ENCODE measurements at regions of chr13 and their contacts with region 1.

Region 1: GRCh38 chr13:23871616-23872220 is 17.5 kb downstream of the MIPEP start:
- DNase-seq: peak in 1 of 2 donors; percentile 39
- ATAC-seq: peak in 1 of 3 donors; percentile 30
- H3K4me3 ChIP-seq: no peak overlapping the region
- H3K4me3 Mint-ChIP-seq: no peak overlapping the region
- H3K27ac ChIP-seq: no peak overlapping the region
- H3K27ac Mint-ChIP-seq: no peak overlapping the region
- H3K4me1 ChIP-seq: no peaks in the 10 kb centered on the region
- H3K4me1 Mint-ChIP-seq: no peaks in the 10 kb centered on the region
- H3K27me3 ChIP-seq: no peaks in the 10 kb centered on the region
- H3K27me3 Mint-ChIP-seq: no peaks in the 10 kb centered on the region
- CTCF ChIP-seq: peak; percentile 81

Region 2: DNA sequence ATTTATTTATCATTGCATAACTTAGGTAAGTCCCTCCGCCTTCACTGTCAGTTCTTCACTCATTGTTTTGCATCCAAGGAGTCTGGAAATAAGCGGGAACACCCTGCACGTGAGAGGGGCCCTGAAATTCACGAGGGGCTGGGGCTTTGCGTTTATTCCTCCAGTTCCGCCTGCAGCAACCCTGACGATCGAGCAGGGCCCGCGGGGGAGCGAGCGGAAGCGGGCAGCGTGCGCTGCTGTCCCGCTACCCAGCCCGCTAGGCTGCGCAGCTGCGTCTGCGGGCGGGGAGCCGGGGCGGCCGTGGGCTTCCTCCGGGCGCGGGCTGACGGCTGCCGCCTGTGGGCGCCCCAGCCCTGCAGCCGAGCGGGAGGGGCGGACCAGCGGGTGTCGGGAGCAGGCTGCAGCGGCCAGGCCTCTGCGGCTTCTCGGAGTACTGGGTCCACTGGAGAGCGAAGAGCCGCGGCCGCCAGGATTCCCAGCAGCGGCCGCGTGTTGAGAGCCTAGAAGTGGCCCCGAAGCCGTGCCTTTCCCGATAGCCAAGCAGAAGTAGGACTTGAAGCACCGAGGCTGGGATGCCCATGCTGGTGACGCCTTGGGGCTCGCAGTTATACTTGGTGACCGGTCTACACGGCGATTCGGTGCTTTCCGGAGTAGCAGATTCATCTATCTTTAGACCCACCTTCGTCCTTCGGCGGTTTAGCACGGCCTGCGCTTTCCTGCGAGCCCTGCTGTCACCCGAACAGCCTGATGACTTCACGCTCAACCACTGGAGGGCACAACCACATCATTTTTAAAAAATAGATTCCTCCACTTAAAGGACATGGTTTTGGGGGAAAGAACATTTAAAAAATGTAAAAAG is 405.3 kb before region 1 on chr13:
- intact Hi-C with region 1: loop called (anchors 1 kb)
- DNase-seq: peak; percentile 49 to 76
- ATAC-seq: peak; percentile 85 to 90 (median 87)
- H3K4me3 ChIP-seq: peak overlapping the region; percentile 44
- H3K4me3 Mint-ChIP-seq: peak overlapping the region; percentile 73
- H3K27ac ChIP-seq: peak overlapping the region; percentile 40
- H3K27ac Mint-ChIP-seq: peak overlapping the region; percentile 37 to 73
- H3K4me1 ChIP-seq: peaks cover 14% of the 10 kb centered on the region
- H3K4me1 Mint-ChIP-seq: peaks cover 10 to 13% of the 10 kb centered on the region in 2 donors
- H3K27me3 ChIP-seq: peaks cover 3% of the 10 kb centered on the region
- H3K27me3 Mint-ChIP-seq: peaks cover 10 to 14% of the 10 kb centered on the region in 2 donors
- CTCF ChIP-seq: peak; percentile 56

Measured in natural killer cell (primary cell).